Natural killer cell (primary cell): ENCODE measurements at regions of chr2 and their contacts with region 1.

Region 1: GRCh38 chr2:226835796-226836547 is at the start of gene RHBDD1:
- DNase-seq: peak; percentile 88 to 98
- ATAC-seq: peak; percentile 86 to 97 (median 88)
- H3K4me3 ChIP-seq: peak within 1 kb of the TSS; percentile 56
- H3K4me3 Mint-ChIP-seq: peak within 1 kb of the TSS; percentile 89
- H3K27ac ChIP-seq: peak within 1 kb of the TSS; percentile 91
- H3K27ac Mint-ChIP-seq: peak within 1 kb of the TSS; percentile 96 to 99
- H3K4me1 ChIP-seq: peaks cover 24% of the 10 kb centered on the region
- H3K4me1 Mint-ChIP-seq: peaks cover 20 to 23% of the 10 kb centered on the region in 2 donors
- H3K27me3 ChIP-seq: no peaks in the 10 kb centered on the region
- H3K27me3 Mint-ChIP-seq: peaks cover 0 to 4% of the 10 kb centered on the region in 2 donors
- CTCF ChIP-seq: no peak
- total RNA-seq, gene RHBDD1: 33.7 to 49.7 (median 47.7) TPM

Region 2: DNA sequence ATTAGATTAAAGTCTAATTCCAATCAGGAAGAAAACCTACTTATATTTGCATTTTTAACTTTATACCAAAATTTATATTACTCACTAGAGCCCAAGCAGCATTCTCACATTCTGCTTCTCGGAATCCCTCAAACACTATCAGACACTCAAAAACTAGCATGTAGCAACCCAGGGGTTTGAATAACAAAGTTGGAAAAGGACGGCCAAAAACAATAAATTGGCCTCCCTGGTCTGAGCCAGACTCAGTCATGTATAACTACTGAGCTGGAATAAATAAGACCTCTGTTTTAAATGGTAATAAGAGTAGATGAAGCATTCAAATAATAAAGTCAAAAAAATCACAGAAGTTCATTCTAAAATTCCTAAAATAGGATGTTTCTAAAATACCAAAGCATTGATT is 327.3 kb before region 1 on chr2:
- intact Hi-C with region 1: no loop called
- DNase-seq: no peak
- ATAC-seq: no peak
- H3K4me3 ChIP-seq: no peak overlapping the region
- H3K4me3 Mint-ChIP-seq: no peak overlapping the region
- H3K27ac ChIP-seq: no peak overlapping the region
- H3K27ac Mint-ChIP-seq: no peak overlapping the region
- H3K4me1 ChIP-seq: no peaks in the 10 kb centered on the region
- H3K4me1 Mint-ChIP-seq: no peaks in the 10 kb centered on the region
- H3K27me3 ChIP-seq: no peaks in the 10 kb centered on the region
- H3K27me3 Mint-ChIP-seq: no peaks in the 10 kb centered on the region
- CTCF ChIP-seq: no peak

Region 3: DNA sequence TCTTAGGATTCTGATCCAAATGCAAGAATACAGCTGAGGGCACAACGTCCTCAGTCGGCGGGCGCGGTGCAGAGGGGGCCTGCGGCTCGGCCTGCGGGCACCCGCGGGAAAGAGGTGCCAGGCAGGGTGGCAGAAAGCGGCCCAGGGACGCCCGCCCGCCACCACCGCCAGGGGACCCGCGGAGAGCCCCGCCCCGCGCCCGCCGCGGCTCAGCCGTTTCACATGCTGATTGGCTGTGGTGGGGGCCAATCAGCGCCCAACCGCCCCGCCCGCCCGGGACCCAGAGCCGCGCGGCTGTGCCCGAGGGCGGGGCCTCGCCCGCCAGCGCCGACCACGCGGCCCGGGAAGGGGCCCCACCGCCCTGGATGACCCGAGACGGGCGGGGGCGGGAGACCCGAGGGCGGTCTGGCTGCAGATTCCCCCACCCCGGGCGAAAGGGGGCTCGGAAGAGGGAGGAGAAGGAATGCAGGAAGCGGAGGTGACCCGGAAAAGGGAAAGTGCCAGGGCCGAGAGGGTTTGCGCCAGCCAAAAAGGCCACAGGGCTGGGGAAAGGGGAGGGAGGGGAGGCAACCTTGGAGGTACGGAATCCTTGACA is 44.4 kb before region 1 on chr2:
- intact Hi-C with region 1: loop called (anchors 1 kb)
- DNase-seq: peak; percentile 82 to 93
- ATAC-seq: peak; percentile 94 to 96 (median 96)
- H3K4me3 ChIP-seq: peak overlapping the region; percentile 71
- H3K4me3 Mint-ChIP-seq: peak overlapping the region; percentile 94
- H3K27ac ChIP-seq: peak overlapping the region; percentile 83
- H3K27ac Mint-ChIP-seq: peak overlapping the region; percentile 86 to 89
- H3K4me1 ChIP-seq: peaks cover 16% of the 10 kb centered on the region
- H3K4me1 Mint-ChIP-seq: peaks cover 9 to 14% of the 10 kb centered on the region in 2 donors
- H3K27me3 ChIP-seq: no peaks in the 10 kb centered on the region
- H3K27me3 Mint-ChIP-seq: peaks cover 16 to 42% of the 10 kb centered on the region in 2 donors
- CTCF ChIP-seq: peak; percentile 24

Region 4: DNA sequence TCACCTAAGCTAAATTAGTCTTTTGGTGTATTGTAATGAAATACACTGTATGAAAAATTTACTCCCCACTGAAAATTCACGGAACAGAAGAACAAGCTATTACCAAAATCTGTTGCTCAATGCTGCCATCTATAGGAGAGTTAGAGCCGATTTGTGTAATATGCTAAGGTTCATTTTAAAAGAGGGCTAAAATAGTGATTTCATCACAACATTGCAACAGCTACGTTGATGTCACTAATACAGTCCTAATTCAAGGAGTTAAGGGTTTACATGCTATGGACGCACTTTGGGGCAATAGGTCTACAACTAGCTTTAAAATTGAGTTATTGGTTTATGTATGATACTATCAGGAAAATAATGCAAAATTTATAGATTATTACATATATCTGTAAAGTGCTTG is 33.4 kb before region 1 on chr2:
- intact Hi-C with region 1: no loop called
- DNase-seq: peak in 1 of 2 donors; percentile 86
- ATAC-seq: peak; percentile 42 to 50 (median 42)
- H3K4me3 ChIP-seq: no peak overlapping the region
- H3K4me3 Mint-ChIP-seq: no peak overlapping the region
- H3K27ac ChIP-seq: no peak overlapping the region
- H3K27ac Mint-ChIP-seq: no peak overlapping the region
- H3K4me1 ChIP-seq: peaks cover 32% of the 10 kb centered on the region
- H3K4me1 Mint-ChIP-seq: peaks cover 9 to 19% of the 10 kb centered on the region in 2 donors
- H3K27me3 ChIP-seq: peaks cover 36% of the 10 kb centered on the region
- H3K27me3 Mint-ChIP-seq: peaks cover 39 to 54% of the 10 kb centered on the region in 2 donors
- CTCF ChIP-seq: peak; percentile 85